Aorta (tissue), 5 donors: ENCODE measurements at regions of chr9 and their contacts with region 1.

Region 1: GRCh38 chr9:77177161-77177893 is at the start of gene VPS13A:
- DNase-seq: peak; percentile 95 to 98
- ATAC-seq: peak; percentile 97
- H3K4me3 ChIP-seq: peak within 1 kb of the TSS; percentile 14 to 50
- H3K27ac ChIP-seq: peak within 1 kb of the TSS; percentile 19 to 49
- H3K4me1 ChIP-seq: no peaks in the 10 kb centered on the region
- H3K27me3 ChIP-seq: no peaks in the 10 kb centered on the region
- total RNA-seq, gene VPS13A: 43.7 to 46.1 TPM

Region 2: DNA sequence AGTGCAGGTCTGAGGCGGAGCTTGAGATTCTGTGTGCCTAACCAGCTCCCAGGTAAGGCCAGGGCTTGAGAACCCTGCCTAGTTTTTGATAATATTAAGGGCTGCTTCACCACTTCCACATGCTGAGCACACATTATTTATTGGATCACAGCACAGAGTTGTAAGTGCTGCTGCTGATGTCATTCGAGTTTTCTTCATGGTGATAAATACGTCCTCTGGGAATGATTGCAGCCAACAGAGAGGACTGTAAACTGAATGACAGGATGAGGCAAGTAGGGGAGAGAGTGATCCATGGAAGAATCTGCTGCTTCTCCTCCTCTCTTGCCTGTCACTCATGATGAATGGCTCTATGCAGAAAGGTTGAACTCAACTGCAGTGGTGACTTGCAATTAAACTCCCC is 77.9 kb before region 1 on chr9:
- intact Hi-C with region 1: no loop called
- DNase-seq: no peak
- ATAC-seq: no peak
- H3K4me3 ChIP-seq: no peak overlapping the region
- H3K27ac ChIP-seq: no peak overlapping the region
- H3K4me1 ChIP-seq: no peaks in the 10 kb centered on the region
- H3K27me3 ChIP-seq: no peaks in the 10 kb centered on the region

Region 3: DNA sequence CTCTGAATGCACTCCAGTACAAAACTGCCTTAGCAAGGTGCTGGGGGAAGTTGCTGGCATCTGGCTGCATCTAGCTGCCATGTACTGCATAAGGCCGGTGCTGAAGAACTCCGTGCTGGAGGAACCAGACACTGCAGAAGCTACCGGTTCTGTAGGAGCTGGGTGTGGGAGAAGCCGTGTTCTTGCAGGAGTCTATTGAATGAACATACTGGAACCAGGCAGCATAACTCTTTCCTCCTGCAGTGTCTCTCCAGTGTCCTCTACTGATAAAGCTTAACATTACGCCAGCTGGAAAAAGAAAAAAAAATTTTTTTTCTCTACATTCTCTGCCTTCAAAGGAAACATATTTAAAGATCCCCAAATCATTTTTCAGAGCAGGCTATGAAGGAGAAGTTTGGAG is 38.5 kb after region 1 on chr9:
- intact Hi-C with region 1: loop called in 1 of 2 experiments (anchors 5 kb)
- DNase-seq: no peak
- ATAC-seq: no peak
- H3K4me3 ChIP-seq: no peak overlapping the region
- H3K27ac ChIP-seq: no peak overlapping the region
- H3K4me1 ChIP-seq: peaks cover 0 to 2% of the 10 kb centered on the region in 2 donors
- H3K27me3 ChIP-seq: no peaks in the 10 kb centered on the region

Region 4: DNA sequence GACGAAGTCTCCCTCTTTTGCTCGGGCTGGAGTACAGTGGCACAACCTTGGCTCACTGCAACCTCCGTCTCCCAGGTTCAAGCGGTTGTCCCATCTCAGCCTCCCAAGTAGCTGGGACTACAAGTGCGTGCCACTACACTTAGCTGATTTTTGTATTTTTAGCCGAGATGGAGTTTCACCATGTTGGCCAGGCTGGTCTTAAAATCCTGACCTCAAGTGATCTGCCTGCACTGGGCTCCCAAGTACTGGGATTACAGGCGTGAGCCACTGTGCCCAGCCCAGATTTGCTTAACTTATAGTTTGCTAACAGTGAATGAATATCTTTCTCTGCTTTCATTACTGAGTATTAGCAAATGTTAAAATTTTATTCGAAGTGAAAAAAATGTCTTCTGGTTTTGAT is 84.3 kb after region 1 on chr9:
- intact Hi-C with region 1: loop called in 1 of 2 experiments (anchors 10 kb)
- DNase-seq: no peak
- ATAC-seq: no peak
- H3K4me3 ChIP-seq: no peak overlapping the region
- H3K27ac ChIP-seq: no peak overlapping the region
- H3K4me1 ChIP-seq: no peaks in the 10 kb centered on the region
- H3K27me3 ChIP-seq: no peaks in the 10 kb centered on the region